Right cardiac atrium (tissue), 5 donors: ENCODE measurements at regions of chr9 and their contacts with region 1.

Region 1: GRCh38 chr9:15211160-15211814 is 95.7 kb downstream of the TTC39B start:
- DNase-seq: peak in 1 of 3 donors; percentile 29
- ATAC-seq: peak; percentile 73
- H3K4me3 ChIP-seq: no peak overlapping the region
- H3K27ac ChIP-seq: peak overlapping the region; percentile 53
- H3K4me1 ChIP-seq: no peaks in the 10 kb centered on the region
- H3K27me3 ChIP-seq: no peaks in the 10 kb centered on the region

Region 2: DNA sequence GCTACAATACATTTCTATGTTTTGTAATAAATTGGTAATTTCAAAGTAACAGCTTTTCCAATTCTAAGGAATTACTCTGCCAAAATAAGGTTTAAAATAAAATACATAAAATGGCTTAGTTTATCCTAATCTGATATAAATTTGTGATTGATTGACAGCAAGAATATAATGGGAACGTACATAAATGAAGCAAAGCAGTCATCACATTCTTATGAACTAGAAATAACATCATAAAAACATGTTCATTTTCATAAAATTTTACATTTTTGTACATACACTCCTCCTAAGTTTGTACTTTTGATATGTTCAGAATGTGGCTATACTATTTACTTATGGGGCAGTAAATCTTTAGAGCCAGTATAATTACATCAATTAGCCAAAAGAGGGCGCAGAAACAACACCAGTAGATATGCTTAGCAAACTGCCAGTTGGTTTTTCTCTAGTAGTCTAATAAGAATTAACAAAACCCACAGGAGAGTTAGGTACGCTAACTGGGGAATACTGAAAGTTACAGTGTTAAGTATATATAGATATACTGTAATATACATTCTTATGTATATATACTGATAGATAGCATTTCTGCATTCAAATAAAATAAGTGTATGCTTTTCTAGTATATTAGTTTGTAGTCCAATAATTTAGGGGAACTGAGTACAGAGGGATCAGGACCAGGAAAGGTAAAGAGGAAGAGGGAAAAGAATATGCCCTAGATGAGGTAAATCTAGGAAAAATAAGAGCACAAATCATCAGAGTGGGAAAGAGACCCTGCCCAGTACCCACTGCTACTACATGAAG is 594.9 kb before region 1 on chr9:
- intact Hi-C with region 1: no loop called
- DNase-seq: no peak
- ATAC-seq: peak in 1 of 2 donors; percentile 48
- H3K4me3 ChIP-seq: no peak overlapping the region
- H3K27ac ChIP-seq: no peak overlapping the region
- H3K4me1 ChIP-seq: no peaks in the 10 kb centered on the region
- H3K27me3 ChIP-seq: no peaks in the 10 kb centered on the region

Region 3: GRCh38 chr9:15180124-15180523 is 31.2 kb before region 1 on chr9:
- intact Hi-C with region 1: no loop called
- DNase-seq: no peak
- ATAC-seq: no peak
- H3K4me3 ChIP-seq: no peak overlapping the region
- H3K27ac ChIP-seq: no peak overlapping the region
- H3K4me1 ChIP-seq: no peaks in the 10 kb centered on the region
- H3K27me3 ChIP-seq: no peaks in the 10 kb centered on the region

Region 4: DNA sequence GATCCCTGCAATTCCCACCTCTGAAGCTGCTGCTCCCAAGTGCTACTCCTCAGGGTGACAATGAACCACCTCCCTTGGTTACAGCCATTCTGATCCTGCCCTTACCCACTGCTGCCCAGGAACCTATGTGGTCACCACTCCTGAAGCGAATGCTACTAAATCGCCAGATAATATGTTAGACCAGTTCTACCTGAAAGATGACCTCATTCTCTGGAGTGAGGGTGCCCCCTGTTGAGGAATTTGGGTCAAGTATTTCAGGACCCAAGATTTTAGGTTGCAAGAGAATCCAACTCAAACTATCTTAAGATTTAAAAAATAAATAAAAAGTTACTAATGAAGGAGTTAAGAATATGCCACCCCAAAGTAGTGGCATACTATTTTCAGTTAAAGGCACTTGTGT is 205.6 kb after region 1 on chr9:
- intact Hi-C with region 1: loop called in 1 of 4 experiments (anchors 10 kb)
- DNase-seq: no peak
- ATAC-seq: peak in 1 of 2 donors; percentile 69
- H3K4me3 ChIP-seq: no peak overlapping the region
- H3K27ac ChIP-seq: no peak overlapping the region
- H3K4me1 ChIP-seq: no peaks in the 10 kb centered on the region
- H3K27me3 ChIP-seq: no peaks in the 10 kb centered on the region

Region 5: DNA sequence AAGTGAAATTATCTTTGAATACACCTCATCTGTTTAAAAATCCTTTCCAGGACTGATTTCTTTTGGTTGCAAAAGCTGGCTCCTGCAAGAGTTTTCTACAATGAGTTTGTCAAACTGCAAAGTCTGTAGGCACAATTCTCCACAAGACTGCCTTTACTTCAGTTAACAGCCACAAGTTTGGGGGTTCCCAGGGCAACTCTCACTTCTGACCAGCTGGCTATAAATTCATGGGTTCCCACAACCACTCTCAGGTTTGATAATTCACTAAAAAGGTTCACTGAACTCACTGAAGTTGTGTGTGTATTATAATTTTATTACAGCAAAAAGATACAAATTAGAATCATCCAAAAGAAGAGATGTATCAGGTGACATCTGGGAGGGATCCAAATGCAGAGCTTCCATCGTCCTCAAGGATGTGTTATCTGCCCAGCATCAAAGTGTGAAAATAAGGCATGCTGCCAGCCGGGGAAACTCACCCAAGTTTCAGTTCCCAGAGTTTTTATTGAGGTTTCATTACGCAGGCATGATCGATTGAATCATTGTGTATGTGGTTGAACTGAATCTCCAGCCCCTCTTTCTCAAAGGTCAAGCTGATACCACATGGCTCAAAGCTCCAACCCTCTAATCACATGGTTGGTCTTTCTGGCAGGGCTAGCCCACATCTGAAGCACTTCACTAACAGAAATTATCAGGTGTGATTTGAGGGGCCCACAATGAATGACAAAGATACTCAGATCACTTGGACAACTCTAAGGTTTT is 318.5 kb after region 1 on chr9:
- intact Hi-C with region 1: no loop called
- DNase-seq: no peak
- ATAC-seq: no peak
- H3K4me3 ChIP-seq: no peak overlapping the region
- H3K27ac ChIP-seq: no peak overlapping the region
- H3K4me1 ChIP-seq: no peaks in the 10 kb centered on the region
- H3K27me3 ChIP-seq: no peaks in the 10 kb centered on the region

Region 6: DNA sequence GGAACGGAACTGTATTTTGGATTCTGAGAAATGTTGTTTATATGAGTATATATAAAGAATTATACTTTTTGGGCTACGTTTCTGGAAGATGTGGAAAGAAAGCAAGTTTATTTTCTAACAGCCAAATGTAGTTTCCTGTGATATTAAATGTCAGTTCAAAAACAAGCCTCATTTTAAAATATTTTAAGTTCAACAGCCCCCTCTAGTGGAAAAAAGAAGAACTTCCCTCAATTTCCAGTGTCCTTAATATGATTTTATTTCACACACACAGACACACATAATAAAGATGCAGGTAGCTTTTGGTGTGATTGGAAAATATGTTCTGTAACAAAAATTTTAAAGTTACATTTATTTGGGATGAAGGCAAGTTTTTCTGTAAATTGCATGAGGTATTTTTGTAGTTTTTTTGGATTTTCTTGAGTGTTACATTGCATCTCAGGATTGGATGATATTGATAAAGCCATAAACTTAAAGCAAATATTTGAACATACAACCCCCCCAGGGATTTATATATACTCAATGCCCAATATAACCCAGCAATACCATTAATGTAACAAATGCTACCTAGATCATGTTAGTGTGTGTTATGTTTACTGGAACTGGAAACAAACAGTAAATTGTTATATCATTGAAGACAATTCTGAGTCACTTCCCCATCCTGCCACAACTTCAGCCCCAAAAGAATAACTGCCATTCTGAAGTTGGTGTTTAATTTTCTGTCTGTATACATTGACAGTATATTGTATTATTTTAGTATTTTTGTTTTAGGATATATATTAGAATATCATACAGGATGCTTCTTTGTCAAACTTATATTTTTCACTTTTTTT is 395.6 kb after region 1 on chr9:
- intact Hi-C with region 1: loop called (anchors 5 to 10 kb)
- DNase-seq: no peak
- ATAC-seq: no peak
- H3K4me3 ChIP-seq: no peak overlapping the region
- H3K27ac ChIP-seq: no peak overlapping the region
- H3K4me1 ChIP-seq: no peaks in the 10 kb centered on the region
- H3K27me3 ChIP-seq: no peaks in the 10 kb centered on the region